ENCODE measurements at regions of chr17 and their contacts with region 1.

Region 1: GRCh38 chr17:29451121-29451742 is 61.1 kb downstream of the TAOK1 start:
- DNase-seq: no peak
- H3K4me3 ChIP-seq: no peak overlapping the region
- H3K27ac ChIP-seq: no peak overlapping the region
- H3K4me1 ChIP-seq: no peaks in the 10 kb centered on the region
- H3K27me3 ChIP-seq: no peaks in the 10 kb centered on the region

Region 2: GRCh38 chr17:29412780-29413565 is 38.3 kb before region 1 on chr17:
- in situ Hi-C with region 1: no loop called
- DNase-seq: peak; percentile 86
- H3K4me3 ChIP-seq: peak overlapping the region; percentile 11; the same call in 1 of the 2 replicates
- H3K27ac ChIP-seq: peak overlapping the region; percentile 59
- H3K4me1 ChIP-seq: peaks cover 29% of the 10 kb centered on the region
- H3K27me3 ChIP-seq: no peaks in the 10 kb centered on the region

Region 3: GRCh38 chr17:29568331-29569244 is 117.4 kb after region 1 on chr17 and contains the start of gene TP53I13:
- in situ Hi-C with region 1: loop called (anchors 25 kb)
- DNase-seq: peak; percentile 78
- H3K4me3 ChIP-seq: peak within 1 kb of the TSS; percentile 91
- H3K27ac ChIP-seq: peak within 1 kb of the TSS; percentile 54
- H3K4me1 ChIP-seq: peaks cover 8% of the 10 kb centered on the region; the same call in 1 of the 2 replicates
- H3K27me3 ChIP-seq: no peaks in the 10 kb centered on the region
- total RNA-seq, gene TP53I13: 63.7 and 67.2 TPM in 2 replicates